ENCODE measurements at regions of chr14 and their contacts with region 1.

Region 1: GRCh38 chr14:22781586-22781991 is 15.1 kb downstream of the OXA1L start:
- DNase-seq: no peak
- ATAC-seq: no peak
- H3K4me3 ChIP-seq: no peak overlapping the region
- H3K27ac ChIP-seq: no peak overlapping the region
- H3K4me1 ChIP-seq: peaks cover 13% of the 10 kb centered on the region
- H3K27me3 ChIP-seq: no peaks in the 10 kb centered on the region
- CTCF ChIP-seq: no peak
- EP300 ChIP-seq: no peak
- POLR2A ChIP-seq: no peak
- RAD21 ChIP-seq: no peak

Region 2: GRCh38 chr14:22520796-22521195 is 260.8 kb before region 1 on chr14:
- CTCF ChIA-PET with region 1: no interaction called
- POLR2A ChIA-PET with region 1: no interaction called
- RAD21 ChIA-PET with region 1: no interaction called
- SMC1A ChIA-PET with region 1: no interaction called
- in situ Hi-C with region 1: no loop called
- intact Hi-C with region 1: no loop called
- DNase-seq: no peak
- ATAC-seq: peak; percentile 51
- H3K4me3 ChIP-seq: 0 out of 2 replicates have a peak overlapping the region, but pooled peaks have one; percentile 15
- H3K27ac ChIP-seq: peak overlapping the region; percentile 80
- H3K4me1 ChIP-seq: peaks cover 99% of the 10 kb centered on the region
- H3K27me3 ChIP-seq: no peaks in the 10 kb centered on the region
- CTCF ChIP-seq: no peak
- EP300 ChIP-seq: no peak
- POLR2A ChIP-seq: no peak
- RAD21 ChIP-seq: no peak

Region 3: GRCh38 chr14:22726012-22726411 is 55.6 kb before region 1 on chr14:
- CTCF ChIA-PET with region 1: no interaction called
- POLR2A ChIA-PET with region 1: no interaction called
- RAD21 ChIA-PET with region 1: no interaction called
- SMC1A ChIA-PET with region 1: no interaction called
- in situ Hi-C with region 1: no loop called
- intact Hi-C with region 1: no loop called
- DNase-seq: no peak
- ATAC-seq: no peak
- H3K4me3 ChIP-seq: no peak overlapping the region
- H3K27ac ChIP-seq: no peak overlapping the region
- H3K4me1 ChIP-seq: no peaks in the 10 kb centered on the region; the same call in 1 of the 2 replicates
- H3K27me3 ChIP-seq: no peaks in the 10 kb centered on the region
- CTCF ChIP-seq: no peak
- EP300 ChIP-seq: no peak
- POLR2A ChIP-seq: no peak
- RAD21 ChIP-seq: no peak

Region 4: GRCh38 chr14:22766456-22767322 is 14.9 kb before region 1 on chr14 and contains the start of gene OXA1L:
- CTCF ChIA-PET with region 1: interaction called, 20 read pairs
- POLR2A ChIA-PET with region 1: interaction called, 4 read pairs
- RAD21 ChIA-PET with region 1: no interaction called
- SMC1A ChIA-PET with region 1: interaction called, 6 read pairs
- in situ Hi-C with region 1: no loop called
- intact Hi-C with region 1: no loop called
- DNase-seq: peak; percentile 92
- ATAC-seq: peak; percentile 89
- H3K4me3 ChIP-seq: peak within 1 kb of the TSS; percentile 91
- H3K27ac ChIP-seq: peak within 1 kb of the TSS; percentile 98
- H3K4me1 ChIP-seq: no peaks in the 10 kb centered on the region; the same call in 1 of the 2 replicates
- H3K27me3 ChIP-seq: no peaks in the 10 kb centered on the region
- CTCF ChIP-seq: no peak
- EP300 ChIP-seq: no peak
- POLR2A ChIP-seq: peak; percentile 92
- RAD21 ChIP-seq: no peak
- polyA plus RNA-seq, gene OXA1L: 110 to 116 TPM

Region 5: DNA sequence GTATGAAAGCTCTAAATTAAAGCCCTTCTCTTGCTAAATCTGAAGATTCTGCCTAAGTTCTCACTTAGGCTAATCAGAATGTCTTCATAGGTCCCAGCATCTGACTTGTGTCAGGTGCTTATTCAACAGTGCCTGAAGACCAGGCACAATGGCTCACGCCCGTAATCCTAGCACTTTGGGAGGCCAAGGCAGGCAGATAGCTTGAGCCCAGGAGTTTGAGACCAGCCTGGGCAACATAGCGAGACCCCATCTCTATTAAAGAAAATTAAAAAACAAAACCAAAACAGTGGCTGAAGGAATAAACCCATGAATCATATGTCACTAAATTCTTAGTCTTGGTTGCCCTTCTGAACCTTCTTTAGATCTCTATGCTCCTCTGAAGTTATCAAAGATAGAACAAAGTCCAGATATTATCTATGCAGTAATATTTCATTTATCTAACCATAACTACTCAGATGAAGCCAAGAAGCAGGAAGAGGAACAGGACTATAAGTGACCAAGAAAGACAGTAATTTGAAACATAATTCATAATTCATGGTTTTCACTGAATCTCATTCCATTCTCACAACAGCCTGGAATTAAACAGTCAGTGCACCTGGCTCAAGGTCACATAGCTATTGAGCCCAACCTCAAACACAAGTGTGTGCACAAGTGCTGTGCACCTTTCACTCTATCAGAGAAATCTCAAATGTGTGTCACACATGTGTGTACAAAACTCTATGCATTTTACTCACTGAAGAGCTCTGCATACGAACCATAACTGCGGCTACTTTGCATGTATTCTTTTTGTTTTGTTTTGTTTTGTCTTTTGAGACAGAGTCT is 27.0 kb after region 1 on chr14:
- CTCF ChIA-PET with region 1: interaction called, 10 read pairs
- POLR2A ChIA-PET with region 1: interaction called, 6 read pairs
- RAD21 ChIA-PET with region 1: interaction called, 3 read pairs
- SMC1A ChIA-PET with region 1: interaction called, 11 read pairs
- in situ Hi-C with region 1: no loop called
- intact Hi-C with region 1: no loop called
- DNase-seq: no peak
- ATAC-seq: no peak
- H3K4me3 ChIP-seq: peak overlapping the region; percentile 13; the same call in 1 of the 2 replicates
- H3K27ac ChIP-seq: peak overlapping the region; percentile 30
- H3K4me1 ChIP-seq: peaks cover 43% of the 10 kb centered on the region
- H3K27me3 ChIP-seq: no peaks in the 10 kb centered on the region
- CTCF ChIP-seq: no peak
- EP300 ChIP-seq: no peak
- POLR2A ChIP-seq: no peak
- RAD21 ChIP-seq: no peak

Region 6: GRCh38 chr14:22814941-22815713 is 33.5 kb after region 1 on chr14 and contains the start of gene SLC7A7:
- CTCF ChIA-PET with region 1: interaction called, 12 read pairs
- POLR2A ChIA-PET with region 1: interaction called, 6 read pairs
- RAD21 ChIA-PET with region 1: interaction called, 11 read pairs
- SMC1A ChIA-PET with region 1: interaction called, 20 read pairs
- in situ Hi-C with region 1: no loop called
- intact Hi-C with region 1: loop called (anchors 1 kb)
- DNase-seq: no peak
- ATAC-seq: peak; percentile 6
- H3K4me3 ChIP-seq: peak within 1 kb of the TSS; percentile 66
- H3K27ac ChIP-seq: peak within 1 kb of the TSS; percentile 75
- H3K4me1 ChIP-seq: peaks cover 28% of the 10 kb centered on the region
- H3K27me3 ChIP-seq: no peaks in the 10 kb centered on the region
- CTCF ChIP-seq: no peak
- EP300 ChIP-seq: no peak
- POLR2A ChIP-seq: no peak
- RAD21 ChIP-seq: no peak
- polyA plus RNA-seq, gene SLC7A7: 48.1 to 72.7 TPM

Region 7: GRCh38 chr14:22900081-22900799 is 118.7 kb after region 1 on chr14:
- CTCF ChIA-PET with region 1: interaction called, 3 read pairs
- POLR2A ChIA-PET with region 1: no interaction called
- RAD21 ChIA-PET with region 1: interaction called, 3 read pairs
- SMC1A ChIA-PET with region 1: interaction called, 5 read pairs
- in situ Hi-C with region 1: no loop called
- intact Hi-C with region 1: loop called (anchors 5 kb)
- DNase-seq: peak; percentile 47
- ATAC-seq: peak; percentile 95
- H3K4me3 ChIP-seq: no peak overlapping the region
- H3K27ac ChIP-seq: no peak overlapping the region
- H3K4me1 ChIP-seq: no peaks in the 10 kb centered on the region
- H3K27me3 ChIP-seq: no peaks in the 10 kb centered on the region
- CTCF ChIP-seq: peak; percentile 65 to 76 (median 69)
- EP300 ChIP-seq: no peak
- POLR2A ChIP-seq: no peak
- RAD21 ChIP-seq: peak; percentile 89

Region 8: DNA sequence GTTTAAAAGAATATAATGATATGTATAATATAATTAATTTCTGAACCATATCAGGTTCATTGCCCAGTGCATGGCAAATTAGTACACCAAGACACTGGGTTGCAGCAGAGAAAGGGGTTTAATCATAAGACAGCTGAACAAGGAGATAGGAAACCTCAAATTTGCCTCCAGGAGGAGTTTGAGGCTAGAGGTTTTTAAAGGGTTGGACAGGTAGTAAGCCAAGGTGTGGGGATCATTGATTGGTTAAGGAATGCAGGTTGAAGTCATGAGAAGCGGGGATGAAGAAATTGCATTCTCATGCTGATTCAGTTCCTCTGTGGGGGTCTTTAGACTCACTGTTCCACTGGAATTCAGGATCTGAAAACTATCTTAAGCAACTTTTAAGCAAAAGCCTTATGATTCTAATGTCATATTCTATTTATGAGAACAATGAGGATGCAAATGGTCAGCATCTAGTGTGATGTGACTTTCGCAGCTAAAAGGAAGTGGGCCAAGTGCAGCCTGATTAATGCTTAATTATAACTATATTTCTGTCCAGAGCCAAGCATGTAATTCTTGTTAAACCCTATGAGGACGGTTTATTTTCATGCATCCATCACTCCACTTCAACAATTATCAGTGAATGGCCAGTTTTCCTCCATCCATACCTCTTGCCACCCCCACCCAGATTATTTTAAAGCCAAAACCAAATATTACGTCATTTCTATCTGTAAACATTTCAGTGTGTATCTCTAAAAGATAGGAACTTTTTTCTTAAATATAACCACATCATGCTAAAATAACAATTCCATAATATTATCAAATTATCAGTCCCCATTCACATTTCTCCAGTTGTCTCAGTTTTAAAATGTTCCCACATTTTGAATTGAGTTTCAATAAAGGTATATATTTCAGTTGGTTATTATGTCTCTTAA is 471.1 kb after region 1 on chr14:
- CTCF ChIA-PET with region 1: no interaction called
- POLR2A ChIA-PET with region 1: no interaction called
- RAD21 ChIA-PET with region 1: no interaction called
- SMC1A ChIA-PET with region 1: no interaction called
- in situ Hi-C with region 1: no loop called
- intact Hi-C with region 1: no loop called
- DNase-seq: no peak
- ATAC-seq: no peak
- H3K4me3 ChIP-seq: no peak overlapping the region
- H3K27ac ChIP-seq: no peak overlapping the region
- H3K4me1 ChIP-seq: no peaks in the 10 kb centered on the region
- H3K27me3 ChIP-seq: no peaks in the 10 kb centered on the region
- CTCF ChIP-seq: no peak
- EP300 ChIP-seq: no peak
- POLR2A ChIP-seq: no peak
- RAD21 ChIP-seq: no peak